PC-3 (cell line): ENCODE measurements at regions of chr11 and their contacts with region 1.

Region 1: DNA sequence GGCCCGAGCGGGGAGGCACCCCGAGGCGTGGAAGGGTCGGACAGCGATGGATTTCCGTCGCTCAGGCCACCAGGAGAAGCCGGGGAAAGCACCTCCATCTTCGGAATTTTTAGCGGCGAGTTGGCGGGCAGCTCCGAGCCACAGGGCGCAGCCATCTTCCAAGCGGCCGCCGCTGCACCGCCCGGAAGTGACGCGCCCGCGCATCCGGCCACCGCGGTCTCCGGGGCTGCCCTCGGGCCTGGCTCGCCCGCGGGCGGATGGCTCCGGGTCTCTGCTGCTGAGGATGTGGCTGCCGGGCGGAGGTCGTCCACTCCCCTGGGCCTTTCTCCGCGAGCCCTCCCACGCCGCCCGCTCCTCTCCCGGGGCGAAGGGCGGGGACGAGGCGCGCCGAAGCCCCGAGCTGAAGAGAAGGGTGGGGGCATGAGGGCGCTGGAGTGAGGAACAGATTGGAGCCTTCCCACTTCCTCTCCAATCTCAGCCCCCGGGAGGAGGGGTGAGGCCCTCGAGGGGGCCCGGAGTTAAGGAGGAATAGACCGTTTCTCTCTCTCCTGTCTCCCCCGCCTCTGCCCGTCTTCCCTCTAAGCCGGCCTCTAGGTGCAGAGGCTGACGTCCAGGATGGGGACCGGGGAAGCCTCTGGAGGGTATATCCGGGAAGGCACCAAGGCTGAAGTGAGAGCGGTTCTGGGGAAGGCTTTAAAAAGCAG is at the start of gene MSANTD2:
- DNase-seq: peak; percentile 76
- ATAC-seq: peak; percentile 77
- H3K4me3 ChIP-seq: peak within 1 kb of the TSS; percentile 70
- H3K27ac ChIP-seq: peak within 1 kb of the TSS; percentile 83
- H3K4me1 ChIP-seq: peaks cover 39% of the 10 kb centered on the region
- H3K27me3 ChIP-seq: no peaks in the 10 kb centered on the region
- CTCF ChIP-seq: no peak
- total RNA-seq, gene MSANTD2: 29.5 and 32.6 TPM in 2 replicates

Region 2: GRCh38 chr11:124739479-124740276 is 60.7 kb before region 1 on chr11 and contains the start of gene NRGN:
- CTCF ChIA-PET with region 1: no interaction called
- POLR2A ChIA-PET with region 1: no interaction called
- intact Hi-C with region 1: loop called (anchors 10 kb)
- DNase-seq: peak; percentile 97
- ATAC-seq: peak; percentile 93
- H3K4me3 ChIP-seq: peak within 1 kb of the TSS; percentile 85
- H3K27ac ChIP-seq: no peak within 1 kb of the TSS
- H3K4me1 ChIP-seq: peaks cover 18% of the 10 kb centered on the region
- H3K27me3 ChIP-seq: no peaks in the 10 kb centered on the region
- CTCF ChIP-seq: no peak
- total RNA-seq, gene NRGN: 15.5 and 20.3 TPM in 2 replicates

Region 3: GRCh38 chr11:124814739-124815138 is 14.4 kb after region 1 on chr11:
- CTCF ChIA-PET with region 1: interaction called, 5 read pairs
- POLR2A ChIA-PET with region 1: interaction called, 6 read pairs
- intact Hi-C with region 1: loop called (anchors 2 kb)
- DNase-seq: peak; percentile 41
- ATAC-seq: no peak
- H3K4me3 ChIP-seq: no peak overlapping the region
- H3K27ac ChIP-seq: no peak overlapping the region
- H3K4me1 ChIP-seq: peaks cover 36% of the 10 kb centered on the region
- H3K27me3 ChIP-seq: no peaks in the 10 kb centered on the region
- CTCF ChIP-seq: no peak